GM13977 (cell line): ENCODE measurements at regions of chr17 and their contacts with region 1.

Region 1: DNA sequence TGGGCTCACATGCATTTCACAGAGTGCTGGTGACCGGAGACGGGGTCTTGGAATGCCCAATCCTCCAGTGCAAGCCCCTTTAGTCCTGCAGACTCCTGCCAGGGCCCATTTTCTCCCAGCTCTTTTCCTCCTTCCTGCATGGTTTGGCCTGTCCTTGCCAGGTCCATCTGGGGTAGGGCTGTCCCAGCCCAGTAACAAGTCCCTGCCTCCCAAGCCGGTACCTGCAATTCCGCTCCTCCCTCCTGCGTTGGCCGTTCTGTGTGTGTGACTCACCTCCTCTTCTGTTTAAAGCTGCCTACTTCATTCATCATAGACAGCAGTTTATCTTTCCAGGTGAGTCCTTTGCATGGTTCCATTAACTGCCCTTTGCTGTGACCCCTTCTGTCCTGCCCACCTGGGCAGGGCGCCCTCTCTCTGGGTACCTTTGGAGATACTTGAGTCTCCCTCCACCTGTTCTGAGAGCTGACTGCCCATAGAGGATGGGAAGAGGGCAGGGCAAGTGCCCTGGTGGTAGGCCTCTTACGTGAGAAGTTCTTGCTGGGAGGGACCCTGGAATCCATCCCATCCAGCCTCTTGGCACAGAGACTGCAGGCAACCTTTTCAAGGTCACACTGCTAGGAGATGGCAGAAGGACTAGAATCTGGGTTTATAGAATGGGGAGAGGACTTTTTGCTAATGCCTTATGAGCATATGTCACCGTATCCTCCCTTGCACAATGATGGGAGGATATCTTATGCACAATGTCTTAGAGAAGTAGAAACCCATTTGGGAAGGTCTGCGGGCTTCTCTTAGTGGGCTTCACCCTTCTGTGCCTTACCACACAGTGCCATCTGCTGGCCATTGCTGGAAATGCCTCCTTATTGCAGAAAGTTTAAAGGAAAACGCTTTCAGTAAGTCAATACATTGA is 29.7 kb upstream of the LGALS9 start:
- DNase-seq: peak; percentile 84
- CTCF ChIP-seq: peak; percentile 92

Region 2: GRCh38 chr17:27236717-27237315 is 364.5 kb before region 1 on chr17:
- in situ Hi-C with region 1: loop called (anchors 10 kb)
- DNase-seq: peak; percentile 67
- CTCF ChIP-seq: peak; percentile 84

Region 3: GRCh38 chr17:27353461-27354050 is 247.8 kb before region 1 on chr17:
- in situ Hi-C with region 1: loop called (anchors 10 kb)
- DNase-seq: peak; percentile 97
- CTCF ChIP-seq: peak; percentile 97

Region 4: GRCh38 chr17:27644586-27644985 is 43.3 kb after region 1 on chr17:
- in situ Hi-C with region 1: no loop called
- DNase-seq: no peak
- CTCF ChIP-seq: no peak

Region 5: DNA sequence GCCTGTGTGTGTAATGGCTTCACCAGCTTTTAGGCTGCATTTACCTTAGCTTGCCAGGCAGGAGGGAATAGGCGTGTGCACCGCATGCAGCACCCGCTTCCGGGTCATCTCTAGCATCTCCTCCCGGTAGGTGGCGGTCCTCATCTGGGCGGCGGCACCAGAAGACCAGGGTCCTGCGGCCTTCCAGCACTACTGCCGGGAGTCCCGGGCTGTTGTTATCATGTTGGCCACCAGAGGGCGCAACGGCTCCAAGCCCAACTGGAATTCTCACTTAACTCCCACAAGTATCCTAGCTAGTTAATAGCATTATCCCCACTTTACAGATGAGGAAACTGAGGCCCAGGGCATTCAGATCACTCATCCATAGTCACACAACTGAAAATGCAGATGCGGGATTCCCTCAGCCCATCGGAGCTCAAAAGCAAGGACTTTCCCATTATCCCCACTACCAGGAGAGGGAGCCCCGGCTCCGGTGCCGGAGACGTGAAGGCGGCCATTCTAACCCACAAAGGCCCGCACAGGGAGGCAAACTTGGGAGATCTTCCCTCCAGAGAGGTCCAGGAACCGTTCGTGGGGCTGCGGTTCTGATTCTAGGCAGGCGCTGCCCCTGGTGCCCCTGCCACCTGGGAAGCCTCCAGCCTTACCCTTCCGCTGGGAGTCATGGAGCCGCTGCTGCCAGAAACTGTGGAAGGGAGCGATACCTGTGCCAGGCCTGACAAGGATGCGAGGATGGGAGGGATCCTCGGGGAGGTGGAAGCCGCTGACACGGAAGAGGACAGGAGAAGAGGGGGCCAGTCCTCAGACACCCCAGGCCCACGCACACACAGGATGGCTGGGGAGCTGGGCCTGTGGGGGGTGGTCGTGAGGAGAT is 53.6 kb after region 1 on chr17:
- in situ Hi-C with region 1: loop called (anchors 10 kb)
- DNase-seq: peak; percentile 85
- CTCF ChIP-seq: peak; percentile 82

Region 6: GRCh38 chr17:27666831-27667560 is 65.7 kb after region 1 on chr17:
- in situ Hi-C with region 1: no loop called
- DNase-seq: no peak
- CTCF ChIP-seq: no peak